ENCODE measurements at regions of chr17 and their contacts with region 1.

Region 1: GRCh38 chr17:8118769-8119580 is 661 bp upstream of the ALOXE3 start:
- DNase-seq: peak; percentile 95
- ATAC-seq: peak; percentile 57
- H3K4me3 Mint-ChIP-seq: peak overlapping the region; percentile 97
- H3K27ac Mint-ChIP-seq: peak overlapping the region; percentile 95
- H3K4me1 Mint-ChIP-seq: peaks cover 35% of the 10 kb centered on the region
- H3K27me3 Mint-ChIP-seq: peaks cover 43% of the 10 kb centered on the region
- CTCF ChIP-seq: peak; percentile 94

Region 2: DNA sequence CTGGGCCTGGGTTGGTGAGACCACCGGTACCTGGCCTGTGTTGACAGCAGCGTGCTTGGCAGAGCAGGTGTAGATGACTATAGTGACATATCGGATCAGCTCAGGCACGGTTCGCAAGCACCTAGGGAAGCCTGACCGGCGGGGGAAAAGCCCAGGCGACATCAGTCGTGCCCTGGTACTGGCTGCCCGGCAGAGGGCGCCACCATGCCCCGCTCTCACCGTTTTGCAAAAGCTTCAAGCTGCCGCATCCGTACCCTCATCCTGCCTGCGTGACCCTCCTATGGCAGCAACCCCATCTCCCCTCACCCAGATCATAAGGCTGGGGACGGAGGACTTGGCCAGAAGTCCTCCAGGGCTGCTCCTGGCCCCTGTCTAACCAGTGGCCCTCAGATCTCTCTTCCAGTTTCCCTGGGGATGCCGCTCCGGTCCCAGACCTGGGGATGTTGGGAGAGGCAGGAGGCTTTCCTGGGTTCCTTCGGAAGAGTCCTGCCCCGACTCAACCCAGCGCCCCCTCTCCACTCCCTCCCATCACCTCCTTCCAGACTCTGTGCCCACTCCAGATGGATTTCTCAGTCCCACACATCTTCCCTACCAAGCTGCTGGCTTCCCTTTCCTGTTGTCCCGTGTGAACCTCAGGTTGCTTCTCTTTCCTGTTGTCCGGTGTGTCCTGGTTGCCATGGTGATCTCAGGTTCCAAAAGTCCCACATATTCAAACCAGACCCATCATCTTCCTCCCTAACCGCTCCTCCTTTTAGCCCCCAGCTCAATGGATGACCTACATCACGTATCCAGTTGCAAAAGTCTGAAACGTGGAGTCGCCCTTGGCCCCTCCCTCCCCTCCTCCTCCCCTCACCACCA is 45.1 kb before region 1 on chr17:
- CTCF ChIA-PET with region 1: interaction called, 98 read pairs
- POLR2A ChIA-PET with region 1: interaction called, 16 read pairs
- intact Hi-C with region 1: loop called (anchors 5 kb)
- DNase-seq: peak; percentile 88
- ATAC-seq: peak; percentile 92
- H3K4me3 Mint-ChIP-seq: peak overlapping the region; percentile 69
- H3K27ac Mint-ChIP-seq: peak overlapping the region; percentile 46
- H3K4me1 Mint-ChIP-seq: peaks cover 19% of the 10 kb centered on the region
- H3K27me3 Mint-ChIP-seq: peaks cover 39% of the 10 kb centered on the region
- CTCF ChIP-seq: peak; percentile 86

Region 3: DNA sequence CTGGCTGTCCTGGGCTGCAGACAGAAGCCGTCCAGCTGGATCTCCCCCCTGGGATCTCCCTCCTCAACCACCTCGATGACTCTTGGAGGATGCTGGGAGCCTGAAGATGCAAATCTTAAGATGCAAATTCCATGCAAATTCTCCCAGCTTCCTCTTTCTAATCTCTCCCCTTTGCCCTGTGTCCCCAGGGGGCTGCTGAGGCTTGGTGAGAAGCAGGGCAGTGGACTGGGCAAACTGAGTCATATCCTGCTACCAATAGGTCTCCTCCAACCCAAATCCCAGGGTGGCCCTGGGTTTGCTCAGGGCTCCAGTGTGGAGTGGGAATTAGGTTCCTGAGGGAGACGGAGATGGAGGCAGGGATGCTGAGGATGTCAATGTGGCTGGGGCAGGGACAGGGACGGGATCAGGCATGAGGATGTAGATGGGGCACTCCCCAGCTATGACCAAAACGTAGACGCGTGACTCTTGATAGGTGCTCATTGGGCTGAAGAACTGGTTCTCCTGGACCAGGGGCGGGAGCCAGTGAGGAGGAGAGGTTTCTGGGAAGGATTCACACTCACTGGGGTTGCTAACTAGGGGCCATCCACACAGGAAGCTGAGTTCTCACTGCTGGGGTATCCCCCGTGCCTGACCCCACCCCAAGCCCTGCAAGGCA is 27.8 kb before region 1 on chr17:
- CTCF ChIA-PET with region 1: interaction called, 73 read pairs
- POLR2A ChIA-PET with region 1: interaction called, 5 read pairs
- intact Hi-C with region 1: no loop called
- DNase-seq: no peak
- ATAC-seq: no peak
- H3K4me3 Mint-ChIP-seq: no peak overlapping the region
- H3K27ac Mint-ChIP-seq: no peak overlapping the region
- H3K4me1 Mint-ChIP-seq: peaks cover 5% of the 10 kb centered on the region
- H3K27me3 Mint-ChIP-seq: peaks cover 27% of the 10 kb centered on the region
- CTCF ChIP-seq: no peak

Region 4: GRCh38 chr17:8156246-8156992 is 37.4 kb after region 1 on chr17:
- CTCF ChIA-PET with region 1: interaction called, 27 read pairs
- POLR2A ChIA-PET with region 1: interaction called, 32 read pairs
- intact Hi-C with region 1: loop called (anchors 2 kb)
- DNase-seq: peak; percentile 100
- ATAC-seq: peak; percentile 73
- H3K4me3 Mint-ChIP-seq: no peak overlapping the region
- H3K27ac Mint-ChIP-seq: no peak overlapping the region
- H3K4me1 Mint-ChIP-seq: peaks cover 59% of the 10 kb centered on the region
- H3K27me3 Mint-ChIP-seq: no peaks in the 10 kb centered on the region
- CTCF ChIP-seq: no peak

Region 5: GRCh38 chr17:8189711-8190477 is 70.9 kb after region 1 on chr17 and contains the start of gene BORCS6:
- CTCF ChIA-PET with region 1: interaction called, 50 read pairs
- POLR2A ChIA-PET with region 1: interaction called, 35 read pairs
- intact Hi-C with region 1: loop called (anchors 1 kb)
- DNase-seq: peak; percentile 98
- ATAC-seq: peak; percentile 67
- H3K4me3 Mint-ChIP-seq: no peak within 1 kb of the TSS
- H3K27ac Mint-ChIP-seq: peak within 1 kb of the TSS; percentile 90
- H3K4me1 Mint-ChIP-seq: peaks cover 10% of the 10 kb centered on the region
- H3K27me3 Mint-ChIP-seq: no peaks in the 10 kb centered on the region
- CTCF ChIP-seq: no peak
- total RNA-seq, gene BORCS6: 5.5 to 6.2 TPM

Region 6: GRCh38 chr17:8311131-8311790 is 192.3 kb after region 1 on chr17:
- CTCF ChIA-PET with region 1: no interaction called
- POLR2A ChIA-PET with region 1: no interaction called
- intact Hi-C with region 1: no loop called
- DNase-seq: no peak
- ATAC-seq: no peak
- H3K4me3 Mint-ChIP-seq: no peak overlapping the region
- H3K27ac Mint-ChIP-seq: no peak overlapping the region
- H3K4me1 Mint-ChIP-seq: no peaks in the 10 kb centered on the region
- H3K27me3 Mint-ChIP-seq: peaks cover 3% of the 10 kb centered on the region
- CTCF ChIP-seq: no peak

Measured in activated CD8-positive, alpha-beta T cell treated with anti-CD3 and anti-CD28 coated beads for 36 hours (primary cell).